ENCODE measurements at regions of chr7 and their contacts with region 1.

Region 1: GRCh38 chr7:40870108-40870507 is 735.3 kb downstream of the SUGCT start:
- DNase-seq: no peak
- H3K4me3 ChIP-seq: no peak overlapping the region
- H3K27ac ChIP-seq: no peak overlapping the region
- H3K4me1 ChIP-seq: no peaks in the 10 kb centered on the region
- H3K27me3 ChIP-seq: no peaks in the 10 kb centered on the region
- CTCF ChIP-seq: no peak
- EP300 ChIP-seq: no peak
- POLR2A ChIP-seq: no peak

Region 2: GRCh38 chr7:40808378-40808942 is 61.6 kb before region 1 on chr7:
- intact Hi-C with region 1: no loop called
- DNase-seq: no peak
- H3K4me3 ChIP-seq: no peak overlapping the region
- H3K27ac ChIP-seq: no peak overlapping the region
- H3K4me1 ChIP-seq: peaks cover 0 to 12% (median 9%) of the 10 kb centered on the region in 4 donors
- H3K27me3 ChIP-seq: no peaks in the 10 kb centered on the region
- CTCF ChIP-seq: no peak
- EP300 ChIP-seq: no peak
- POLR2A ChIP-seq: no peak

Region 3: DNA sequence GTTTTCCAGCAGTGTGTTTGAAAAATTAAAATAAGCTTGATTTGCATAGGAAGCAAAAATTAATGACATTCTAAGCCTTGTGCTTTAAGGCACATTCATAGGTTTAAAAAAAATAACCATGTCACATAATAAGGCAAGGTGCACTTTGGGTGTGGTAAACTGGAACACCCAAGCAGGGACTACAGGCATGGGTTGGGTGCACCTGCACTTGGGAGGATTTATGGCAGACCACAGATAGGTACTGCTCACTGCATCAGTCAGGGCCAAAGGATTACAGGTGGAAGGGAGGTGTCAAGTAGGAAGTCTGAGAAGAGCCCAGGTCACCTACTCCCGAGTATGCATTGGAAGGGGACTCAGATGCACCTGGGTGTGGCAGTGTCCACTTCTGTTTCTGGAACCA is 18.4 kb after region 1 on chr7:
- intact Hi-C with region 1: loop called (anchors 2 kb)
- DNase-seq: no peak
- H3K4me3 ChIP-seq: no peak overlapping the region
- H3K27ac ChIP-seq: no peak overlapping the region
- H3K4me1 ChIP-seq: peaks cover 0 to 18% (median 0%) of the 10 kb centered on the region in 4 donors
- H3K27me3 ChIP-seq: no peaks in the 10 kb centered on the region
- CTCF ChIP-seq: no peak
- EP300 ChIP-seq: no peak
- POLR2A ChIP-seq: no peak

Region 4: GRCh38 chr7:41097501-41097900 is 227.4 kb after region 1 on chr7:
- intact Hi-C with region 1: no loop called
- DNase-seq: no peak
- H3K4me3 ChIP-seq: no peak overlapping the region
- H3K27ac ChIP-seq: peak overlapping the region in 1 of 4 donors; percentile 60
- H3K4me1 ChIP-seq: peaks cover 0 to 12% (median 3%) of the 10 kb centered on the region in 4 donors
- H3K27me3 ChIP-seq: no peaks in the 10 kb centered on the region
- CTCF ChIP-seq: no peak
- EP300 ChIP-seq: no peak
- POLR2A ChIP-seq: no peak

Region 5: DNA sequence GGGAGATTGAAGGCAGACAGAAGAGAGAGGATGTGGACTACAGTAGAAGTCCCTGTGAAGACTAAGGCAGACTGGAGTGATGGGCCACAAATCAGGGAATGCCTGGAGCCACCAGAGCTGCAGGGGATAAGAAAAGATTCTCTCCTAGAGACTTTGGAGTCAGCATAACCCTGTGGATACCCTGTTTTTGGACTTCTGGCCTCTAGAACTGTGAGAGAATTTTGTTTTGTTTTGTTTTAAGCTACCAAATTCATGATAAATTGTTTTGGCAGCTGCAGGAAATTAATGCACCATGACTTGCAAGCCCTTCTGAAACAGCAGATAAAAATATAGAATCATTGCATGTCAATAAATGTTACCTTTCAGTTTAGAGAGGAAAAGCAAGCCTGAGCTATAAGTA is 791.5 kb after region 1 on chr7:
- intact Hi-C with region 1: no loop called
- DNase-seq: no peak
- H3K4me3 ChIP-seq: no peak overlapping the region
- H3K27ac ChIP-seq: no peak overlapping the region
- H3K4me1 ChIP-seq: peaks cover 0 to 4% (median 1%) of the 10 kb centered on the region in 4 donors
- H3K27me3 ChIP-seq: no peaks in the 10 kb centered on the region
- CTCF ChIP-seq: no peak
- EP300 ChIP-seq: no peak
- POLR2A ChIP-seq: no peak